CD8-positive, alpha-beta T cell (primary cell): ENCODE measurements at regions of chr3 and their contacts with region 1.

Region 1: DNA sequence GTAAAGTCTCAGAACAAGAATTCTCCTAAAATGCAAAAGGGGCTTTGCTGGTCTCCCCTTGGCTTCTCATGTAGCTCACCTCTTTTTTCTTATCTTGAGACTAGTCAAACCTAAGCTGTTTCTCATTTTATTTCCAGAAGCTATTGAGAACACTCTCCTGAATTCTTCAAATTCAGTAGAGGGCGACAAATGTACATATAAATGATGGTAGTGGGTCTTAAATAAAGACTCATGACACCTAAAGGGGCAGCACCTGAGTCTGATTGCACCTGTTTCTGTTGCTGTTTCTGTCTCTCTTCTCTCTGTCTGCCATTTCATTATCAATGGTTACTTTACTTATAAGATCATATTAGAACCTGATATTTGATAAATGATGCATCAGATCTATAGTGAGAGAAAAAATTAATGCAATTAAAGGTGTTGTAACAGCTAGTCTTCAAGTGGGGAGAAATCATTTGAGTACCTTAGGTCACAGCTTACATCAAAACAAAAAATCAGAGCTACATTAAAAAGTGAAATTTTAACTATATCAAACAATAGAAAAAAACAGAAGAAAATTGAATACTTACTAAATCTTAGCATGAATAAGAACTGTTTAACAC is 7.0 kb downstream of the ADIPOQ start:
- DNase-seq: peak in 2 of 9 experiments; percentile 70 to 81
- ATAC-seq: peak; percentile 95
- H3K4me3 ChIP-seq: no peak overlapping the region
- H3K4me3 Mint-ChIP-seq: no peak overlapping the region
- H3K27ac ChIP-seq: no peak overlapping the region
- H3K27ac Mint-ChIP-seq: no peak overlapping the region
- H3K4me1 ChIP-seq: no peaks in the 10 kb centered on the region
- H3K4me1 Mint-ChIP-seq: peaks cover 19% of the 10 kb centered on the region
- H3K27me3 ChIP-seq: peaks cover 0 to 3% of the 10 kb centered on the region in 2 experiments
- H3K27me3 Mint-ChIP-seq: peaks cover 4% of the 10 kb centered on the region
- CTCF ChIP-seq: peak; percentile 73

Region 2: DNA sequence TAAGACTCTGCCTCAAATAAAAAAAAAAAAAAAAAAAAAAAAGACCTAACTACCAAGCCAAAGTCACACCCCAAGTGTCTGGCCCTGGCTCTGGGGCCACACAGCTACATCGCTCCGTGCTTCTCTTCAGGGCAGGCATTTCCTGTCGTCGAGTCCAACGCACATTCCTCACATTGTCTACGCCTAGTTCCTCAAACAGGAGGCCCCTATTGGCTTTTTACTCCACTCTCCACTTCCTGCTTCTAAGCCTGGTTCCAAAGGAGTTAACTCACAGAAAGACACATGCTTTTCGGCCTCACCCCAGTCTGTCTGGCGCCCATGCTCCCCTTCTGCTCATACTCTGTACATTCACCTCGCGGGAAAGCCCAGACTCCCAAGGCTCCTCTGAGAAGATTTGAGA is 103.5 kb before region 1 on chr3:
- CTCF ChIA-PET with region 1: no interaction called
- POLR2A ChIA-PET with region 1: no interaction called
- intact Hi-C with region 1: no loop called
- DNase-seq: no peak
- ATAC-seq: no peak
- H3K4me3 ChIP-seq: no peak overlapping the region
- H3K4me3 Mint-ChIP-seq: no peak overlapping the region
- H3K27ac ChIP-seq: no peak overlapping the region
- H3K27ac Mint-ChIP-seq: no peak overlapping the region
- H3K4me1 ChIP-seq: no peaks in the 10 kb centered on the region
- H3K4me1 Mint-ChIP-seq: peaks cover 2% of the 10 kb centered on the region
- H3K27me3 ChIP-seq: no peaks in the 10 kb centered on the region
- H3K27me3 Mint-ChIP-seq: no peaks in the 10 kb centered on the region
- CTCF ChIP-seq: no peak

Region 3: GRCh38 chr3:186821429-186822367 is 27.8 kb before region 1 on chr3:
- CTCF ChIA-PET with region 1: interaction called, 14 read pairs
- POLR2A ChIA-PET with region 1: no interaction called
- intact Hi-C with region 1: no loop called
- DNase-seq: peak in 3 of 9 experiments; percentile 31 to 75 (median 68)
- ATAC-seq: peak; percentile 30
- H3K4me3 ChIP-seq: no peak overlapping the region
- H3K4me3 Mint-ChIP-seq: no peak overlapping the region
- H3K27ac ChIP-seq: no peak overlapping the region
- H3K27ac Mint-ChIP-seq: no peak overlapping the region
- H3K4me1 ChIP-seq: peaks cover 12% of the 10 kb centered on the region
- H3K4me1 Mint-ChIP-seq: peaks cover 14% of the 10 kb centered on the region
- H3K27me3 ChIP-seq: peaks cover 4 to 7% of the 10 kb centered on the region in 2 experiments
- H3K27me3 Mint-ChIP-seq: peaks cover 18% of the 10 kb centered on the region
- CTCF ChIP-seq: peak; percentile 76

Region 4: DNA sequence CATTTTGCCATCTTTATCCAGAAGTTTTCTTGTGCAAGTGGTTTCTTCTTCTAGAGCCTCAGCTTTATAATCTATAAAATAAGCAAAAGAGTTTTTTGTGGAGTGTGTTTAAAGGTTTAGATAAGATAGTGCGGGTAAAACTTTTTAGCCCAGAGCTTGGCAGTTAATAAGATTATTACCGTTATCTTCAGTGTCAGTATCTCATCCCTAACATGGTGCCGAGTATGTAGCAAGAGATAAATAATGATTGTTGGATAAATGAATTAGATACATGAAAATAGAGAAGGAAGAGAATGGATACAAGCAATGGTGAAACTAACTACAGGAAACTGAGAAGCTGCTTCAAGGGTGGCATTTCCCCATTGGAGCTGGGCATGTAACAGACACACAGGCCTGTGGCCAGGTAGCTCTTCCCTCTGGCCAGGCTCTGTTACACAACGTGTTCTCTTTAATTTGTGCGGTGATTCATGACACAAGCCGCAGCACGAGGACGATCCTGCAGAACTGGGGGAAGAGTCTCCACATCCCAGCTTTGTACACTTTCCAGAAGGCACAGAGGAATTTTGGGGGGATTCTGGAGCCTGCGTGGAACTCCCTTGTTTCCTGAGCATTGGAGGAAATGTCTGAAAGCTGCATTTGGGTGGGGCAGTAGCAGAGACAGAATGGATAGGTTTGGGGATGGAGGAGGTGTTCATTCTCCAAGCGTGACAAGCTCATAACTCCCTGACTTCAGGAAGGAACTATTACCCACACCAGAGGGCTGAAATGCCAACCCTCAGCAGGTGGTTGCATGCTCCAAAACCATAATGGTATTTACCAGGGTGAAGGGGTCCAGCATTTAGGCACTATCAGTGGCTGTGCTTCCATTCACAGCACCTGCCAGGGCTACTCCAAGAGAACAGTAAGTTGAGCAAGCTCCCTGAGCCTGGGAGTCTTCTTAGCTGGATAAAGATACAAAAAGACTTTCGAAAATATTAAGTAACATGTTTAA is 66.6 kb after region 1 on chr3:
- CTCF ChIA-PET with region 1: interaction called, 27 read pairs
- POLR2A ChIA-PET with region 1: no interaction called
- intact Hi-C with region 1: no loop called
- DNase-seq: peak in 3 of 9 experiments; percentile 23 to 53 (median 50)
- ATAC-seq: peak; percentile 48
- H3K4me3 ChIP-seq: peak overlapping the region in 1 of 2 experiments; percentile 9
- H3K4me3 Mint-ChIP-seq: peak overlapping the region; percentile 50
- H3K27ac ChIP-seq: no peak overlapping the region
- H3K27ac Mint-ChIP-seq: peak overlapping the region; percentile 78
- H3K4me1 ChIP-seq: peaks cover 32% of the 10 kb centered on the region
- H3K4me1 Mint-ChIP-seq: peaks cover 40% of the 10 kb centered on the region
- H3K27me3 ChIP-seq: no peaks in the 10 kb centered on the region
- H3K27me3 Mint-ChIP-seq: no peaks in the 10 kb centered on the region
- CTCF ChIP-seq: no peak

Region 5: DNA sequence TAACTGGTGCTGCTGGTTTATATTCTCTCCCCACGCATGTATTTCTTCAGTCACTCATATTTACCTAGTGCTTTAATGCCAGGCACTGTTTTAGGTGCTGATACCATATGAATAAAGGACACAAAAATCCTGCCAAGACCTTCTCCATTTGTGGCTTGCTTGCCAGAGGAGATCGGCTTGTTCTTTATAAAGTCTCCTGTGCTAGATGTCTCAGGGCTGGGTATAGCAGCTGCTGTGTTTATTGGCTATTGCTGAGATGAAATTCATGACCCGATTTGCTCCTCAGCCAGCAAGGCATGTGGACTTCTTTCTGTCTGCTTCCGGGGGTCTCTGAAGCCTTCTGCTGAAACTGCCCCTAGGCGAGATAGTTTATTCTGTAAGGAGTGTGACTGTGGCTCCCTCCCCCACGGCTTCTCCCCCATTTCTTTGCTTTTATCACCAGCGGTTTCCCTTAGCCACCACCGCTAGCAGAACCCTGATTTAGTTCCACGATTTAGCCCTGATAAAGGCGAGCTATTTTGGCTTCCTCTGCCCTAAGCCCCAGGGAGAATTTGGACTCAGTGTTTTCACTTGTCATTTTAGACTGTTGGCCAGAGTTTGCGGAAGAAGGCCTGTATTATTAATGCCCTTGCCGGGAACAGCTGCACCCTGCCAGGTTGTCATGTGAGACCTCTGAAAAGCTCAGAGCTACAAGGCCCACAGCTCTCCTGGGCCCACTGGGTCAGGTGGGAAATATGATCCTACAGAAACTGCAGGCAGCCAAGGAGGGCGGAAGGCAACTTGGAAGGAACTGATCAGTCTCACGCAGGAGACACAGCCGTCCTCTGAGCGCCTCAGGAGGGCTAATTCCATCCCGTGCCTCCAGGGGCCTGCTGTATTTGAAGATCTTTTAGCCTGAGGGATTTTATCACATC is 127.6 kb after region 1 on chr3:
- CTCF ChIA-PET with region 1: interaction called, 16 read pairs
- POLR2A ChIA-PET with region 1: interaction called, 3 read pairs
- intact Hi-C with region 1: no loop called
- DNase-seq: no peak
- ATAC-seq: no peak
- H3K4me3 ChIP-seq: no peak overlapping the region
- H3K4me3 Mint-ChIP-seq: no peak overlapping the region
- H3K27ac ChIP-seq: no peak overlapping the region
- H3K27ac Mint-ChIP-seq: no peak overlapping the region
- H3K4me1 ChIP-seq: no peaks in the 10 kb centered on the region
- H3K4me1 Mint-ChIP-seq: peaks cover 15% of the 10 kb centered on the region
- H3K27me3 ChIP-seq: no peaks in the 10 kb centered on the region
- H3K27me3 Mint-ChIP-seq: no peaks in the 10 kb centered on the region
- CTCF ChIP-seq: no peak

Region 6: DNA sequence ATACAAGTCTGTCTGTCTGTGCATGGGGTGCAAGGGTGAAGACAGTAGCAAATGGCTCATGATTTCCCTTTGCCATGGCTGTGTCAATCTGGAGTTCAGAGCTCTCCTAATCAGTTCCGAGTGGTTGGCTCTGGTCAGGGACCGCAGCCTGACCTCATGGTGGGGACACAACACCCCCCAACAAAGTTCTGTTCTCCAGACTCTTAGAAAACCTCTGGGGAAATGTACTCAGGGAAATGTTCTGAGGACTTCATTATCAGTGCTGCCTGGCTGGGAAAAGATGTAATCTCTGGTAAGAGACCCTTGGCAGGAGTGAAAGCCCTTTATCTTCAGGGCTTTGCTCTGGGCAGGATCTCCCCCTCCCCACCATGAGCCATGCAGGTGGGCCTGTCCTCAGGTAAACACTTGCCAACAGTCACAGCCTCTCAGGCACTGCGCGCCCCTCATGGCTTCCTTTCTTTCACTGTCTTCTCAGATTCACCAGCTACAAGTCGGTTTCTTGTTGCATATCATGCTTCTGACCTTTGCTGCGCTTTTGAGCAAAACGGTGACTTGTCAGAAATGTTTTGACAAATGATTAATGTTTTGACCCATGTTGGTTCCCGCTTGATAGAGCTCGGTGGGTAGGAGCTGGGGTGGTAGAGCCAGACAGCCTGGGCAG is 176.3 kb after region 1 on chr3:
- CTCF ChIA-PET with region 1: interaction called, 23 read pairs
- POLR2A ChIA-PET with region 1: interaction called, 4 read pairs
- intact Hi-C with region 1: no loop called
- DNase-seq: peak in 4 of 9 experiments; percentile 39 to 72 (median 48)
- ATAC-seq: peak; percentile 3
- H3K4me3 ChIP-seq: peak overlapping the region; percentile 52 to 71
- H3K4me3 Mint-ChIP-seq: peak overlapping the region; percentile 83
- H3K27ac ChIP-seq: peak overlapping the region; percentile 62 to 64
- H3K27ac Mint-ChIP-seq: peak overlapping the region; percentile 97
- H3K4me1 ChIP-seq: peaks cover 44% of the 10 kb centered on the region
- H3K4me1 Mint-ChIP-seq: peaks cover 68% of the 10 kb centered on the region
- H3K27me3 ChIP-seq: no peaks in the 10 kb centered on the region
- H3K27me3 Mint-ChIP-seq: no peaks in the 10 kb centered on the region
- CTCF ChIP-seq: no peak

Region 7: DNA sequence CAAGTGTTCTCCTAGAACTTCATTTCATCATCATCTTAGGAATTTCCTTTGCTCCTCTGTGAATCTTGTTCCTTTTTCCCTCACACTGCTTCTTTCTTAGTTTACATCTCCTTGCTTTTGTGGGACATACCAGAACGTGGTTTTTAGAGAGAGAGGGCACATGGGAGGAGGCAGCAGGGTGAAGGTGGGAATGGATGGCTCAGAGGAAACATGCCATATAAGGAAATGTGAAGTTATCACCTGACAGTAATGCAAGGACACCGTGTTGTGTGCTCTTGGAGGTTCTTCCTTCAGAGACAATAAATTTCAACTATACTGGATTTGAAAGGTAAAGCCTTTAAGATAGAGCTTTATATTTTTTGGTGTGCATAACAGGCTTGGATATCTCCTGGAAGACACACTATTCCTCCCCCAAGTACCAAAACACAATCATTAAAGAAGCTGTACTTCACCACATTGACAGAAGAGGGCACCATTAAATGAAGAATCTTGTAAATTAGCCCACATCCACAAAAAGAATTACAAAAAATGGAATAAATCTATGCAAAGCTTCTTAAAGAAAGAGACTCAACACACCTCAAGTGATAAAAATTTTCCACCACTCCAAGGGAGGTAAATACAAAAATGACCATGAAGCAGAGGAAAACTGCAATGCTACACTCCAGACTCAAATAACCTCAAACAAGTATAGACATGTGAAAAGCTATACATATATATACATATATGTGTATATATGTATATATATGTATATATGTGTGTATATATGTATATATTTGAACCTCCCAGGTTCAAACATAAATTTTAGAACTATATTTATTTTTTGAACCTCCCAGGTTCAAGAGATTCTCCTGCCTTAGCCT is 263.7 kb after region 1 on chr3:
- CTCF ChIA-PET with region 1: interaction called, 39 read pairs
- POLR2A ChIA-PET with region 1: interaction called, 3 read pairs
- intact Hi-C with region 1: loop called in 1 of 2 experiments (anchors 1 kb)
- DNase-seq: peak in 2 of 9 experiments; percentile 61 to 70
- ATAC-seq: peak; percentile 58
- H3K4me3 ChIP-seq: no peak overlapping the region
- H3K4me3 Mint-ChIP-seq: no peak overlapping the region
- H3K27ac ChIP-seq: no peak overlapping the region
- H3K27ac Mint-ChIP-seq: no peak overlapping the region
- H3K4me1 ChIP-seq: no peaks in the 10 kb centered on the region
- H3K4me1 Mint-ChIP-seq: peaks cover 7% of the 10 kb centered on the region
- H3K27me3 ChIP-seq: no peaks in the 10 kb centered on the region
- H3K27me3 Mint-ChIP-seq: no peaks in the 10 kb centered on the region
- CTCF ChIP-seq: peak; percentile 81

Region 8: DNA sequence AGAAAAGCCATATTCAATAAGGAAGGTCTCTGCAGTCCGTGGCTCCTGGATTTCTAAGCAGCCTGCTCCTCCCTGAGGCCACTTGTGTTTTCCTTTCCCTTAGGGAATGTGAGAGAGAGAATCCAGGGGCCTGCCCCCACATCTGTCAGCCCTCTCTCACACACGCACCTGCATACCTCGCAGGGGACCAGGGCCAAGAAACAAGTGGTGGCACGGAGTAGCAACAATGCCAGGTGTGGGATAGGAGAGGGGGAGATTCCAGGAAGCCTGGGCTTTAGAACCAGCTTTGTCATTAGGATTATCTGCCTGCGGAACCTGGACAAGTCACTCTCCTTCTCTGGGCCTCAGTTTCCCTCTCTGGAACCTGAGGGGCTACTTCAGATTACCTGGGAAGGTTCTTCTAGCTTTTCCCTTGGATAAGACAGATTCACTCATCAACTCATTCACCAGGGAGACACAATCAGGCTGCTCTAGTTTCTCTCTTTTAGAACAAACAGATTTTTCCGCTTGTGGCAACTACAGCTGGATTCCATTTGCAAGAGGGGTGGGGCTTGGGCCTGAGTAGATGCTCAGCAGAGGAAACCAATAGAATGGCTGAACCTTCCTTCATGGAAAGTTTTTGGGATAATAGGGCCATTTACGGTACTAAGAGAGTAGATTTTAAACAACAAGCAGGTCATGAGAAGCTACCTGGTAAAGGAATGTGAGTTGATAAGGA is 876.3 kb after region 1 on chr3:
- CTCF ChIA-PET with region 1: no interaction called
- POLR2A ChIA-PET with region 1: no interaction called
- intact Hi-C with region 1: no loop called
- DNase-seq: no peak
- ATAC-seq: no peak
- H3K4me3 ChIP-seq: no peak overlapping the region
- H3K4me3 Mint-ChIP-seq: no peak overlapping the region
- H3K27ac ChIP-seq: no peak overlapping the region
- H3K27ac Mint-ChIP-seq: no peak overlapping the region
- H3K4me1 ChIP-seq: no peaks in the 10 kb centered on the region
- H3K4me1 Mint-ChIP-seq: no peaks in the 10 kb centered on the region
- H3K27me3 ChIP-seq: no peaks in the 10 kb centered on the region
- H3K27me3 Mint-ChIP-seq: no peaks in the 10 kb centered on the region
- CTCF ChIP-seq: no peak